ENCODE measurements at regions of chr17 and their contacts with region 1.

Region 1: DNA sequence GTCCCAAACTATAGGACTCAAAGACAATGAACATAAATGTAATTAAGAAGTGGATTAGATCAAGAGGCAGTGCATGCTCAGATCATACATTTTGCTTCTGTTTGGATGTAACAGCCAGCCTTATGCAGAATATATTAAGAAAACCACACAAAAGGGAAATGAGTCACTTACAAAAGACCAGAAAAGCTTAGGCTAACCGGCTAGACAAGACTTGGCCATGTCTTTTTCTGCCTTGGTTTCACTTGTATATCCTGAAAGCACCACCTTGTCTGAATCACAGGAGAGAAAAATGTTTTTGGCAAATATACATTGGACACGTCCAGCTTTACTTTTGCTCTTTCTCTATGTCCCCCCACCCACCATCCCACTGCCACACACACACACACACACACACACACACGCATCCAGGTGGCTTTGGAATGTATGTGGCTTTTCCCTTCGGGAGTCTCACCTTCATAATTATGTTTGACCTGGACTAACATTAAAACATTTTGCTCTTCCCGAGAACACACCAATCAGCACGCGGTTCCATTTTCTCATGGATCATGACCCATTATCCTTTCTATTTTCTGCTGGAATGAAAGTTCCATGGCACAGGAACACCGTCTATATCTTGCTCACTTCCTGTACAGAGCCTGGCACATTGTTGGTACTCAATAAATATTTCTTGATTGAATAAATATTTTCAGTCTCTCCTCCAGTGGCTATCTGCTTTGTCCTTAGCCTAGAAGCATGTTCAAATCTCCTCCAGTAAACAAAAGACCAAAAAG is 64.6 kb downstream of the CDK5R1 start:
- DNase-seq: peak; percentile 76
- H3K4me3 ChIP-seq: peak overlapping the region in 1 of 3 experiments; percentile 46
- H3K27ac ChIP-seq: peak overlapping the region; percentile 82
- H3K4me1 ChIP-seq: peaks cover 16% of the 10 kb centered on the region
- H3K27me3 ChIP-seq: no peaks in the 10 kb centered on the region
- CTCF ChIP-seq: no peak
- POLR2A ChIP-seq: no peak

Region 2: DNA sequence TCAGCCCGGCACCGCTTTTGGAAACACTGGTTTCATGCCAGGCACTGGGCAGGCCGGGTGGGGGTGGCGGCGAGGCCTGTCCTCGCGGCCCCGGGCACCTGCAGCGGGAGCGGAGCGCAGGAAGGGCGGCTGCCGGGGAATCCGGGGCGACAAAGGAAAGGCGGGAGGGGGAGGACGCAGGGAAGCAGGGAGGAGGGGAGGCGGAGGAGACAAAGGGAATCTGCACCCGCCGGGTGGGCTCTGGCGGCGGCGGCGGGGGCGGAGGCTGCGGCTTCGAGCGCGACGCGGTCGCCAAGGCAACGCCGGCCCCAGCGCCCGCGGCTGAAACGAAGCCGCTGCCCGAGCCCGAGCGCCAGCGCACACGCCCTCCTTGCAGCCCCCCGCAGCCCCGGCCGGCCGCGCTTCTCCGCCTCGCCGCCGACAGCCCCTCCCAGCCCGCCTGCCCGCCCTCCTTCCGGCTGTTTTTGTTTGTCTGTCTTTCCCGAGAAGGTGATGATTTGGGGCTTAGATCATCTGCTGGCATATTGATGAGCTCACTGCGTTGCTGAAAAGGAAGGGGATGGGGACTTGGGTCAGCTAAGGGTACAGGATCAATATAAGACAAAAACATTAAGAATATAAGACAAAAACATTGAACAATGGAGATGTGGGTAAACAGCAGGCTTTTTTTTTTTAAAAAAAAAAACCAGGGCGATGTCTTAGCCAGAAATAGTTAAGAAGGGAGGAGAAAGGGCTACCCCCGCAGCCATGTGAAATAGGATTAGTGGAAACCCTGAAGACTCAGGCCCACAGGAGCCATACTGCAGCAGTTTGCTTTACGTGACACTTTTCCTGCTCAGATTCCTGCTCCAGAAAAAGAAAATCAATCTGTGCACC is 31.9 kb before region 1 on chr17:
- CTCF ChIA-PET with region 1: interaction called, 3 read pairs
- POLR2A ChIA-PET with region 1: no interaction called
- dilution Hi-C with region 1: no loop called
- intact Hi-C with region 1: loop called (anchors 1 kb)
- DNase-seq: peak; percentile 49
- H3K4me3 ChIP-seq: peak overlapping the region; percentile 6 to 50 (median 48)
- H3K27ac ChIP-seq: peak overlapping the region; percentile 66
- H3K4me1 ChIP-seq: peaks cover 19% of the 10 kb centered on the region
- H3K27me3 ChIP-seq: no peaks in the 10 kb centered on the region
- CTCF ChIP-seq: no peak
- POLR2A ChIP-seq: no peak

Region 3: GRCh38 chr17:32536736-32537643 is 14.4 kb before region 1 on chr17:
- CTCF ChIA-PET with region 1: interaction called, 3 read pairs
- POLR2A ChIA-PET with region 1: no interaction called
- dilution Hi-C with region 1: no loop called
- intact Hi-C with region 1: loop called (anchors 1 kb)
- DNase-seq: peak; percentile 70
- H3K4me3 ChIP-seq: no peak overlapping the region
- H3K27ac ChIP-seq: peak overlapping the region; percentile 53
- H3K4me1 ChIP-seq: peaks cover 16% of the 10 kb centered on the region
- H3K27me3 ChIP-seq: no peaks in the 10 kb centered on the region
- CTCF ChIP-seq: no peak
- POLR2A ChIP-seq: no peak

Measured in endothelial cell of umbilical vein (primary cell).